ENCODE measurements at regions of chr9 and their contacts with region 1.

Region 1: GRCh38 chr9:69056191-69056815 is 20.8 kb downstream of the FXN start:
- DNase-seq: no peak

Region 2: DNA sequence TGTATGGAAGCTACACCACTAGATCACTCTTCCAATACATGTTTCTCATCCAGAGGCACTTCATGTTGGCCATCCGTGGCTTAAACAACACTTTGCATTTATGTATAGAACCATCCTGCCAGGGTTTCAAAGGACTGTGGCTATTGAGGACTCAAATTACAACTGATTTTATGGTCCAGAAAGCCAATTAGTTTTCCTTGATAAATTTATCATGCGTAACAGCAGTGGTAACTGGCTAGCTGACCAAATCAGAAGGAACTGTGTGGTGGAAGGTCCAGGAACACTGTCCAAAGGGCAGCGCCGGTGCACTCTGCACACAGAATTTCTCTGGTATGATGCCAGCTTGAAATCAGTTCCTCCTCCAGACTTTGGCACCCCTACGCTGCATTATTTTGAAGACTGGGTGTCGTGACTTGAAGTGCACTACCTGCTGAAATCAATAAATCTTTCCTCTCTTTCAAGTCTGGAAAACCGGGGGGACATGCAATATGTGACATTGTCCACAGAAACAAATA is 446.3 kb before region 1 on chr9:
- intact Hi-C with region 1: no loop called
- DNase-seq: no peak

Region 3: GRCh38 chr9:69035438-69036308 is 20.6 kb before region 1 on chr9 and contains the start of gene FXN:
- intact Hi-C with region 1: no loop called
- DNase-seq: peak; percentile 95
- total RNA-seq, gene FXN: 9.3 to 9.4 TPM

Region 4: DNA sequence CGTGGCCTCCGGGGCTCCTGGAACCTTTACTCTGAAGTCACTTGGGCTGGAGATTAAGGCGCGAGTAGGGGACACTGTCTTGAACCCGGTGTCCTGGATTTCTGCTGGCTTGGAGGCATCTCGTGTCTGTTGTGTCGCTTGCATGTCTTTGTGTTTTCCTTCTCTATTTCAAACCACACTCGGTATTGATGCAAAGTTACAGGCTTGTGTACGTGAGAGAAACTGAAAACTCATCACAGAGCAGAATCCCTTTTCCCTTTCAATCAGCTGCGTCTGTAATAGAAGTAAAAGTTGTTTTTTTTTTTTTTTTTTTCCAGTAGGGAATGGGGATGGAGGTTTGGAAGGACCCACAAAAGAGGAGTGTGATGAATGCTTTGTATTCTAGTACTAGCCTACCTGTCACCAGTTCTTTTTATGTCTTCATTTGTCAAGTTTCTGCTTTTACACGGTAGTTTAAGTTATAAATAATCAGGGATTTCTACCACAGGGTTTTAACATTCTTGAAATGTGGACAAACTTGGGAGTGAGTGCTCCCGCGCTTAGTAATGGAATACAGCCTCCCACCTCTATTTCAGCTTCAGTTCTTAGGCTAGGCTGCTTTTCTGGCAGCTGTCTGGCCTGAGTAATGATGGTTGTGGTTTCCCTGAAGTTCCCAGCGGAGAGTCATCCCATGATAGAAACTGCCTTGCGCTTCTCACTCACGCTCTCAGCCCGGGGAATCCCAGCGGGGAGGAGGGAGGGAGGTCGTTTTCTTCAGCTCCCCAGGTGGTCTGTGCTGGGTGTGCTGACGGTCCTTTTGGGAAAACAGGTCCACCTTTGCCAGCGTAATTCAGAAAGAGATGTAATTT is 118.5 kb after region 1 on chr9:
- intact Hi-C with region 1: loop called in 1 of 2 experiments (anchors 10 kb)
- DNase-seq: peak; percentile 85

Region 5: GRCh38 chr9:69190086-69190862 is 134.0 kb after region 1 on chr9:
- intact Hi-C with region 1: loop called in 1 of 2 experiments (anchors 5 kb)
- DNase-seq: no peak

Measured in posterior vena cava (tissue), 2 donors.